Panc1 (cell line): ENCODE measurements at regions of chr11 and their contacts with region 1.

Region 1: GRCh38 chr11:47932544-47932943 is 47.8 kb upstream of the PTPRJ start:
- DNase-seq: no peak
- ATAC-seq: no peak
- H3K4me3 ChIP-seq: no peak overlapping the region
- H3K27ac ChIP-seq: peak overlapping the region; percentile 68; the same call in 1 of the 2 replicates
- H3K4me1 ChIP-seq: peaks cover 7% of the 10 kb centered on the region; the same call in 1 of the 2 replicates
- H3K27me3 ChIP-seq: no peaks in the 10 kb centered on the region
- CTCF ChIP-seq: no peak

Region 2: DNA sequence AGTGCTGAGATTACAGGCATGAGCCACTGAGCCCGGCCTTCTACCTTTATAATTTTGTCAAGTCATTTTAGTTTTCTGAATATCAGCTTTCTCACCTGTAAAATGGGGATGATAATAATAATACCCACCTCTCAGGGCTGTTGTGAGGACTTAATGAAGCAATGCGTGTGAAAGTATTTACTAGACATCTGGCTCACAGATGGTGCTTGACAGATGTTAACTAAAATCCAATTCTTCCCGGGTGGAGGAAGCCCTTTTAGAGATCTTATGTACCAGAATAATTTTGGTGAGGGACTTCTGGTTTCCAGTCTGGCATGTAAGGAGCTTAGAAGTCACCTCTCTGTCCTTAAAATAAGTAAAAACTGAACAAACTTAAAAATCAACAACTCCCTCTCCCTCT is 40.7 kb before region 1 on chr11:
- CTCF ChIA-PET with region 1: no interaction called
- POLR2A ChIA-PET with region 1: no interaction called
- in situ Hi-C with region 1: no loop called
- intact Hi-C with region 1: no loop called
- DNase-seq: no peak
- ATAC-seq: no peak
- H3K4me3 ChIP-seq: no peak overlapping the region
- H3K27ac ChIP-seq: no peak overlapping the region
- H3K4me1 ChIP-seq: no peaks in the 10 kb centered on the region
- H3K27me3 ChIP-seq: no peaks in the 10 kb centered on the region
- CTCF ChIP-seq: no peak

Region 3: DNA sequence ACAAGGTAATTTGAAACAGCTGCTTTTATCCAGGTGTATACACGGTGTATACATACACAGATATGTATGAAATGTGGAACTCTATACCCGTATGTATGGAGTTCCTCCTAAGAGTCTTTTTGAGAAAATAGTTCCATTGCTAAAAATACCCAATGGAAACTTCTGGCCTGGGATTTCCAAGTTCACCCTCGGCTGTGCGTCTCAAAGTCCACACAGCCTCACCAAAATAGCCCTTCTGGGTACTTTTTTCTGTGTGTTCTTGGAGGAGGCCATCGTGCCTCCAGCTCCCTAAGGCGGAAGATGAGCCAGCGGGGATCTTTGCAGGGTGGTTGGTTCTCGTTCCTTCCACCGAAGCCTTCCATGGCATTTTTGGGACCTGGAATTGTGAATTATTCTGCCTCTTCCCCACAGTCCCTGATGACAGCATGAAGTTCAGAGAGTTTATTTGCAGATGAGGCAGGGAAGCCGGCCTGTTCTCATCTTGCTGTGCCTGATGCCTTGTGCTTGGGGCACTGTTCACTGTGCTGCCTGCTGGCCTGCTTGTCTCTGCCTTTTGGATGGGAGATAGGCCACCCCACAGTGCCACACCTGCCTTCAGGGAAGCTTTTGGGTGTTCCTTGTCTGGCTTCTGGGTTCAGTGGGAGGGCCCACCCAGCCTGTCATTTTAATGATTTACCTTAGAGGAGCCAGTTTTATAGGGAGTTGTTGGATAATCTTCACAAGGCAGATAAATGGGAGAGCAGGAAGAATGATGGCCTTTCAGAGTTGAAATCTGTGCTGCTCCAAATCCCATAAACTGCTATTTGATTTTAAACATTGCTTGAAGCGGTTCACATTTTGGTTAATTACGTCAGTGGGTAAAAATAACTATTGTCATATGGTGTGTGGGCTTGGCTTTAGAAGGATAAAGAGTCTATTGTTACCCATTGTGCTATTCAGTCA is 171.3 kb after region 1 on chr11:
- CTCF ChIA-PET with region 1: interaction called, 6 read pairs
- POLR2A ChIA-PET with region 1: interaction called, 19 read pairs
- in situ Hi-C with region 1: no loop called
- intact Hi-C with region 1: loop called (anchors 2 kb)
- DNase-seq: no peak
- ATAC-seq: 0 out of 2 replicates have a peak, but pooled peaks have one; percentile 17
- H3K4me3 ChIP-seq: no peak overlapping the region
- H3K27ac ChIP-seq: no peak overlapping the region
- H3K4me1 ChIP-seq: peaks cover 20% of the 10 kb centered on the region
- H3K27me3 ChIP-seq: no peaks in the 10 kb centered on the region
- CTCF ChIP-seq: no peak

Region 4: DNA sequence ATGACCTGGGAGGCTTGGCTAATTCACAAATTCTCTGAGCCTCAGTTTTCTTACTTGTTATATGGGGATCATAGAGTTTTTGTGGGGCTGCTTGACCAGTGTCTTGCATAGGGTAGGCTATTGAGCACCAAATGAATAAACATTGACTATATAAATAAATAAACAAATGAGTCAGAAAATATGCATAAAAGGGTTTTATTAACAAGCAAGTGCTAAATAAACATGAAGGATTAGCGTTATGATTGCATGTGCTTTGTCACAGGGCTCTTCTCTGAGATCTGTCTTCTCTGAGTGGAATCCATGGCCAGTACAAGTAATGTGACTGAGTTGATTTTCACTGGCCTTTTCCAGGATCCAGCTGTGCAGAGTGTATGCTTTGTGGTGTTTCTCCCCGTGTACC is 284.0 kb after region 1 on chr11 and contains the start of gene OR4B1:
- CTCF ChIA-PET with region 1: no interaction called
- POLR2A ChIA-PET with region 1: no interaction called
- in situ Hi-C with region 1: no loop called
- intact Hi-C with region 1: no loop called
- DNase-seq: no peak
- ATAC-seq: no peak
- H3K4me3 ChIP-seq: no peak within 1 kb of the TSS
- H3K27ac ChIP-seq: no peak within 1 kb of the TSS
- H3K4me1 ChIP-seq: no peaks in the 10 kb centered on the region
- H3K27me3 ChIP-seq: no peaks in the 10 kb centered on the region
- CTCF ChIP-seq: no peak
- total RNA-seq, gene OR4B1: not detected